ENCODE measurements at regions of chr5 and their contacts with region 1.

Region 1: GRCh38 chr5:71658916-71659662 is 60.0 kb upstream of the CARTPT start:
- DNase-seq: no peak
- H3K4me3 Mint-ChIP-seq: no peak overlapping the region
- H3K27ac Mint-ChIP-seq: no peak overlapping the region
- H3K4me1 Mint-ChIP-seq: peaks cover 22% of the 10 kb centered on the region
- H3K27me3 Mint-ChIP-seq: no peaks in the 10 kb centered on the region
- CTCF ChIP-seq: no peak

Region 2: DNA sequence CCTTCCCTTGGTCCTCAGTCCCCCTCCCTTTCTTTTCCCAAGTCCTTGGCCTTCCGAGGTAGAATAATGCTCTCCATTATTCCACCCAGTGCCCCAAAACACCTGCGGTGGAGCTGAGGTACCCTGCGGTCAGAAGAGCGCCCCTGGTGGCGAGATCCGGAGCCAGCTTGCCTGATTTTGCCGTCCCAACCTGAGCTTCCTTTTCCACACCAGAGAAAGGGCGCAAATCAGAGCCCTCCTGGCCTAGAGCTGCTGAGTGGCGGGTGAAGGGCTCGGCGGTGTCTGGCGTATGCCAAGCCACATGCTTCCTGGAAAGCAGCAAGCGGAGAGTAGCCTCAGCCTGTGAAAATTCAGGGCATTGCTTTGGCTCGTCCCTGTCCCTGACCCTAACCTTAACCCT is 38.9 kb after region 1 on chr5:
- CTCF ChIA-PET with region 1: no interaction called
- intact Hi-C with region 1: no loop called
- DNase-seq: no peak
- H3K4me3 Mint-ChIP-seq: no peak overlapping the region
- H3K27ac Mint-ChIP-seq: no peak overlapping the region
- H3K4me1 Mint-ChIP-seq: peaks cover 42% of the 10 kb centered on the region
- H3K27me3 Mint-ChIP-seq: no peaks in the 10 kb centered on the region
- CTCF ChIP-seq: peak; percentile 31

Region 3: GRCh38 chr5:71738662-71739361 is 79.7 kb after region 1 on chr5:
- CTCF ChIA-PET with region 1: interaction called, 4 read pairs
- intact Hi-C with region 1: loop called (anchors 5 kb)
- DNase-seq: peak; percentile 35
- H3K4me3 Mint-ChIP-seq: peak overlapping the region; percentile 40
- H3K27ac Mint-ChIP-seq: peak overlapping the region; percentile 68
- H3K4me1 Mint-ChIP-seq: peaks cover 33% of the 10 kb centered on the region
- H3K27me3 Mint-ChIP-seq: no peaks in the 10 kb centered on the region
- CTCF ChIP-seq: no peak

Region 4: GRCh38 chr5:71757590-71758543 is 98.8 kb after region 1 on chr5:
- CTCF ChIA-PET with region 1: interaction called, 9 read pairs
- intact Hi-C with region 1: loop called (anchors 1 kb)
- DNase-seq: peak; percentile 75
- H3K4me3 Mint-ChIP-seq: no peak overlapping the region
- H3K27ac Mint-ChIP-seq: peak overlapping the region; percentile 43
- H3K4me1 Mint-ChIP-seq: peaks cover 12% of the 10 kb centered on the region
- H3K27me3 Mint-ChIP-seq: no peaks in the 10 kb centered on the region
- CTCF ChIP-seq: peak; percentile 77

Region 5: GRCh38 chr5:72920690-72921502 is 1261.8 kb after region 1 on chr5:
- CTCF ChIA-PET with region 1: no interaction called
- intact Hi-C with region 1: no loop called
- DNase-seq: no peak
- H3K4me3 Mint-ChIP-seq: no peak overlapping the region
- H3K27ac Mint-ChIP-seq: peak overlapping the region; percentile 20
- H3K4me1 Mint-ChIP-seq: no peaks in the 10 kb centered on the region
- H3K27me3 Mint-ChIP-seq: no peaks in the 10 kb centered on the region
- CTCF ChIP-seq: no peak

Measured in Calu3 (cell line).